ENCODE measurements at regions of chr1 and their contacts with region 1.

Region 1: GRCh38 chr1:109112652-109113285 is 1.1 kb upstream of the ELAPOR1 start:
- DNase-seq: peak; percentile 93 to 99 (median 97)

Region 2: GRCh38 chr1:108963052-108963686 is 149.6 kb before region 1 on chr1 and contains the start of gene CLCC1:
- intact Hi-C with region 1: no loop called
- DNase-seq: peak; percentile 86 to 97 (median 95)

Region 3: GRCh38 chr1:109161858-109162606 is 49.3 kb after region 1 on chr1:
- intact Hi-C with region 1: no loop called
- DNase-seq: peak in 41 of 42 donors; percentile 25 to 83 (median 57)

Region 4: GRCh38 chr1:109181105-109181806 is 68.5 kb after region 1 on chr1:
- intact Hi-C with region 1: loop called (anchors 10 kb)
- DNase-seq: no peak

Region 5: DNA sequence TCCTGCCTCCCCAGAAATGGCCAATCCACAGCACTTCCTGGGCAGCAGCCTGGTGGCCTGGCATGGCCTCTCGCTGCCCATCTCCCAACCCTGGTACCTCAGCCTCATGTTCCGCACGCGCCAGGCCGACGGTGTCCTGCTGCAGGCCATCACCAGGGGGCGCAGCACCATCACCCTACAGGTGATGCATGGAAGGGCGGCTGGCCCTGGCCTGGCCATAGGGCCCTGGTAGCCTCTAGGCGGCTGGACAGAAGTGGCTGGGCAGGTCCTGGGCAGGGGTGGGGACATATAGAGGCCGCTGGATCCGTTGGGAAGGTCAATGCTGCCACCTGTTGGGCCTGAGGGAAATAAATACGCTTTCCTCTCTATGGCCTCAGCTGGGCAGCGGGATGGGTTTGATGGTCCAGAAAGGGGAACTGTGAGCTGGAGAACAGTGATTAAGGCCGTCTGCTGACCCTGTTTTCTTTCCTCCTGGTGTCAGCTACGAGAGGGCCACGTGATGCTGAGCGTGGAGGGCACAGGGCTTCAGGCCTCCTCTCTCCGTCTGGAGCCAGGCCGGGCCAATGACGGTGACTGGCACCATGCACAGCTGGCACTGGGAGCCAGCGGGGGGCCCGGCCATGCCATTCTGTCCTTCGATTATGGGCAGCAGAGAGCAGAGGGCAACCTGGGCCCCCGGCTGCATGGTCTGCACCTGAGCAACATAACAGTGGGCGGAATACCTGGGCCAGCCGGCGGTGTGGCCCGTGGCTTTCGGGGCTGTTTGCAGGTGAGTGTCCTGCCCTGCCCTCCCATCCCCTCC is 151.0 kb after region 1 on chr1:
- intact Hi-C with region 1: loop called (anchors 10 kb)
- DNase-seq: peak; percentile 63 to 94 (median 84)